ENCODE measurements at regions of chr6 and their contacts with region 1.

Region 1: DNA sequence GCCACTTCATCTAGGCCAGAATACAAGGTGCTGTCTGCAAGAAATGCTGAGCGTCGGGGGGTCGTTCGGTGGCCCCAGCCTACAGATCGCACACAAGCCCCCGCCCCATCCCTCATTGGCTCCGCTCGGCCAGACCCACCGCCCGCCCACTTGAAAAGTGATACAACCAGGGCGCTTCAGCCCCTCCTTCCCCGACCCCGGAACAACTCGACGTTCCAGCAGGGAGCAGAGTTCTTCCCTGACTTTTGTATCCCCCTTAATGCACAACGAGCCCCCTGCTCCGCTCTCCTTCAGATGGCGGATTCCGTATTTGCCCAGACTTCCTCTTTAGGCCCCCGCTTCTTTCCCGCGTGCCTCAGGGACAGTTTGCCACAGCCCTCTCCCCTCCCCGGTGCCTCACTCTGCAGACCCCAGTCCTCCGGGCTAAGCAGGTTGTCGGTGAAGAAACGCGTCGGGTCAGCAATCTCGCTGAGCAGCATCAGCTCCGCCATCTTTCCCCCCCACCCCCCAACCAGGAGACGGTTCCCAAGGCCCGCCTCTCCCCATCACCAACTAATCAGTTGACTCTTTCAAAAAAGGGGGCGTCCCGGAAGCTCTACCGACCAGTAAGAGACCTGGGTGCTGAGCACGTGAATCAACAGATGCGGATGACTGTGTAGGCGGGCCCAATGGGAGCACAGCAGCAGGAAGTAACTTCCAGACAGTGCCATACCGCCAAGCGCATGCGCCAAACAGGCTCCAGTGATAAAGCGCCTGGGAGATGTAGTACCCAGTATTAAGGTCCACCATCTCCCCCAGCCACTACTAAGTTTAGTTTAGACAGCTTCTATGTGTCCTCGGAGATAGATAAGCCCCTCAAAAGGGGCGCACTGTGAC is at the start of gene ATF6B:
- DNase-seq: peak; percentile 94 to 99
- H3K4me3 ChIP-seq: peak within 1 kb of the TSS; percentile 97
- H3K27ac ChIP-seq: peak within 1 kb of the TSS; percentile 57
- H3K4me1 ChIP-seq: peaks cover 29% of the 10 kb centered on the region
- H3K27me3 ChIP-seq: no peaks in the 10 kb centered on the region
- CTCF ChIP-seq: no peak
- total RNA-seq, gene ATF6B: 87.2 and 102 TPM in 2 replicates

Region 2: GRCh38 chr6:31163922-31164321 is 964.0 kb before region 1 on chr6:
- CTCF ChIA-PET with region 1: no interaction called
- POLR2A ChIA-PET with region 1: interaction called, 11 read pairs
- intact Hi-C with region 1: no loop called
- DNase-seq: no peak
- H3K4me3 ChIP-seq: no peak overlapping the region
- H3K27ac ChIP-seq: no peak overlapping the region
- H3K4me1 ChIP-seq: peaks cover 13% of the 10 kb centered on the region
- H3K27me3 ChIP-seq: no peaks in the 10 kb centered on the region
- CTCF ChIP-seq: no peak

Region 3: GRCh38 chr6:31901953-31902643 is 225.9 kb before region 1 on chr6 and contains the start of gene ZBTB12:
- CTCF ChIA-PET with region 1: no interaction called
- POLR2A ChIA-PET with region 1: interaction called, 21 read pairs
- intact Hi-C with region 1: no loop called
- DNase-seq: peak; percentile 76 to 95
- H3K4me3 ChIP-seq: peak within 1 kb of the TSS; percentile 65
- H3K27ac ChIP-seq: peak within 1 kb of the TSS; percentile 18; the same call in 1 of the 2 replicates
- H3K4me1 ChIP-seq: peaks cover 23% of the 10 kb centered on the region
- H3K27me3 ChIP-seq: no peaks in the 10 kb centered on the region
- CTCF ChIP-seq: no peak
- total RNA-seq, gene ZBTB12: 16.2 and 20.3 TPM in 2 replicates

Region 4: GRCh38 chr6:32153564-32154513 is 25.9 kb after region 1 on chr6 and contains the start of gene PPT2:
- CTCF ChIA-PET with region 1: no interaction called
- POLR2A ChIA-PET with region 1: interaction called, 17 read pairs
- intact Hi-C with region 1: loop called (anchors 1 kb)
- DNase-seq: peak; percentile 70 to 77
- H3K4me3 ChIP-seq: peak within 1 kb of the TSS; percentile 77
- H3K27ac ChIP-seq: peak within 1 kb of the TSS; percentile 96
- H3K4me1 ChIP-seq: peaks cover 18% of the 10 kb centered on the region
- H3K27me3 ChIP-seq: no peaks in the 10 kb centered on the region
- CTCF ChIP-seq: peak; percentile 45; the same call in 1 of the 2 replicates
- total RNA-seq, gene PPT2: 38.2 and 42.5 TPM in 2 replicates

Region 5: DNA sequence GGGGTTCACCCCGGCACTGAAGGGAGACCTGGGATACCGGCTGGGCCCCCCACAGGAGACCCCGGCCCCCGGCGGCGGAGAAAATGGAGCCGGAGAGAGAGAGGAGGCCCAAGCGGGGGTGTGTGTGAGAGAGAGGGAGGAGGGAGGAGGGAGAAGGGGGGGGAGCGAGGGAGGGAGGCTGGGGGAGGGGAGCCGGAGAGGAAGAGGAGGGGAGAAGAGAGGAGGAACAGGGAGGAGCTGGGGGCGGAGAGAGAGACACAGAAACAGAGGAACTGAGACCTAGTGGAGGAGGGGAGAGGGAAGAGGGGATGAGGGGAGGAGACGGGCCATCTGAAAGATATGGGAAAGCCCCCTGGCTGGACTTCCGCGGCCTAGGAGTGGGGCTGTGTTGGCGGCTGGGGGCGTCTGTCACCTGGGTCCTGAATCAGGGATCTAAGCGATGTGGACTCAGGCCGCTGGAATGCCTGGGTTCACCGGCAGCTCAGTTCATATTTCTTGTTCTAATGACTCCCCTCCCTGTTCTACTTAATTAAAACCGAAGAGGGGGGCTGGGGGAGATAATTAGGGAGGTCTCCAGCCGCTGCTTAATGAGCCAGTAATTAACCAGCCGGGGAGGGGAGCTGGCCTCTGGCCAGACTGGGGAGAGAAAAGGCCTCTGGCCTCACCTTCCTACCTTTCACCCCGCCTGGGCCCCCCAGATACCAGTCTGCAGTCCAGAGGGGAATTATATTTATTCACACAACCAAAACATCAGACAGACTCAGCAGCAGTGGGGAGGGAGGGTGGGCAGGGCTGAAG is 62.3 kb after region 1 on chr6 and contains the start of gene PBX2:
- CTCF ChIA-PET with region 1: interaction called, 4 read pairs
- POLR2A ChIA-PET with region 1: interaction called, 23 read pairs
- intact Hi-C with region 1: loop called (anchors 5 kb)
- DNase-seq: peak; percentile 56 to 74
- H3K4me3 ChIP-seq: peak within 1 kb of the TSS; percentile 85
- H3K27ac ChIP-seq: peak within 1 kb of the TSS; percentile 30
- H3K4me1 ChIP-seq: peaks cover 19% of the 10 kb centered on the region
- H3K27me3 ChIP-seq: no peaks in the 10 kb centered on the region
- CTCF ChIP-seq: no peak
- total RNA-seq, gene PBX2: 88.2 and 89.3 TPM in 2 replicates

Measured in PC-9 (cell line).